ENCODE measurements at regions of chr13 and their contacts with region 1.

Region 1: GRCh38 chr13:44969551-44970484 is 19.5 kb downstream of the NUFIP1 start:
- DNase-seq: peak; percentile 78
- H3K4me3 ChIP-seq: no peak overlapping the region
- H3K27ac ChIP-seq: no peak overlapping the region
- H3K4me1 ChIP-seq: peaks cover 21% of the 10 kb centered on the region
- H3K27me3 ChIP-seq: no peaks in the 10 kb centered on the region

Region 2: DNA sequence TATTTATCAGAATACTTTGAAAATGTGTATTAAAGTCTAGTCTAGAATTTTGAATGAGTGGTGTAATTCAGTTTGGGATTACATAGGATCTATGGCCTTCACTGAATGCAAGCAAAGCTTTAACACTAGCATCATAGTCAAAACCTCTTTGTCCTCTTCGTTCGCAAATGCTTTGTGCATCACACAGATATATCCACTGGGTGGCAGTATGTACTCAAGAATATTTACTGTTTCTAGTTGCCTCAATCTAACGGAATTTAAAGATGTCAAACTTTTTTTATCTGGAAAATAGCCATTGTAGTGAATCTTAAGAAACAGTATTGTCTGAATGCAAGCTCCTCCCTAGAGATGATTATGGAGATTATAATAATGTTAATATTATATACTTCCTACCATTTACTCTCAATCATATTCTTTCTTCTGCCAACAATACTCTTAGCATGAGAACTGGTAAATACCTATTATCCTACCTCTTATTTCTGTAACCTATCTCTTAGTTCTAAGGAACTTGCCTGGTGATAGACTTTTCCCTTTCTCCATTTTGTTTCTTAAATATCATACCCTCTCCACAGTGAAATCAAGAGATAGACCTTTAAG is 1064.3 kb before region 1 on chr13:
- in situ Hi-C with region 1: loop called (anchors 25 kb)
- DNase-seq: peak; percentile 81
- H3K4me3 ChIP-seq: no peak overlapping the region
- H3K27ac ChIP-seq: no peak overlapping the region
- H3K4me1 ChIP-seq: peaks cover 8% of the 10 kb centered on the region; the same call in 1 of the 2 replicates
- H3K27me3 ChIP-seq: no peaks in the 10 kb centered on the region

Region 3: DNA sequence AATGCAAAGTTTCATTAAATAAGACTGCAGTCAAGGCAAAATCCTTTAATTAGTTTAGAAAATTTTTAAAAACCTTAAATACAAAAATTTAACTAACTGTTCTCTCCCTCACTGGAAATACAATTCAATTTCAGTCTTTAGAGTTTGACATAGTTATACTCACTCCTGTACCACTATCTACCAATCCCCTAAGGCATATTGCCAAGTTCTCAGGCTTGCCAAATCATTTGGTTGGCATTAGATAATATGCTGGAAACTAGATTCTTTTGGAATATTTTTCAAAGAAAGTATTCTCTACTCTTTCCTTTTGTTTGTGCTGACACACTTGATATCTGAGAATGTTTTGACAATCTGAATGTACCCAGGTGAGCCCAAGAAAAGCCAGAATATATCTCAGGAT is 470.8 kb before region 1 on chr13:
- in situ Hi-C with region 1: loop called (anchors 10 kb)
- DNase-seq: no peak
- H3K4me3 ChIP-seq: no peak overlapping the region
- H3K27ac ChIP-seq: no peak overlapping the region
- H3K4me1 ChIP-seq: no peaks in the 10 kb centered on the region
- H3K27me3 ChIP-seq: no peaks in the 10 kb centered on the region

Measured in GM23248 (cell line).